HCT116 (cell line): ENCODE measurements at regions of chr7 and their contacts with region 1.

Region 1: GRCh38 chr7:32298408-32299132 is 191.6 kb downstream of the LSM5 start:
- DNase-seq: no peak
- ATAC-seq: no peak
- H3K4me3 ChIP-seq: no peak overlapping the region
- H3K27ac ChIP-seq: no peak overlapping the region
- H3K4me1 ChIP-seq: no peaks in the 10 kb centered on the region
- H3K27me3 ChIP-seq: peaks cover 37% of the 10 kb centered on the region
- CTCF ChIP-seq: no peak
- POLR2A ChIP-seq: no peak
- RAD21 ChIP-seq: no peak

Region 2: DNA sequence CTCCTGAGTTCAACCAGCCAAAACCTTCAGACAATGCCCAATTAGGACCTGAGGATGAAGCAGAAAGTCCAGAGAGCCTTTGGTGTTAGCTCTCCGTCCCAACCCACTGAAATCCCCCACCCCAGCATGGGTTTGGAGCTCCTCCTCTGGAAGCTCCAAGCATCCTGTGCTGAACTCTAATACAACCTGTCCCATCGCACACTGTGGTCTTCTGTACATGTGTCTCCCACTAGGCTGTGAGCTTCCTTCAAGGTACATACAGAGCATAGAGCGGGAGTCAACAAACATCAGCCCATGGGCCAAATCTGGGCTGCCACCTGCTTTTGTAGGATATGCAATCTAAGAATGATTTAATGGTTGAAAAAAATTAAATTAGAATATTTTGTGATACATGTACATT is 25.1 kb after region 1 on chr7:
- CTCF ChIA-PET with region 1: no interaction called
- POLR2A ChIA-PET with region 1: no interaction called
- RAD21 ChIA-PET with region 1: no interaction called
- intact Hi-C with region 1: loop called (anchors 1 kb)
- DNase-seq: no peak
- ATAC-seq: no peak
- H3K4me3 ChIP-seq: no peak overlapping the region
- H3K27ac ChIP-seq: no peak overlapping the region
- H3K4me1 ChIP-seq: no peaks in the 10 kb centered on the region
- H3K27me3 ChIP-seq: peaks cover 53% of the 10 kb centered on the region
- CTCF ChIP-seq: no peak
- POLR2A ChIP-seq: no peak
- RAD21 ChIP-seq: no peak